ENCODE measurements at regions of chr5 and their contacts with region 1.

Region 1: GRCh38 chr5:171418316-171418981 is 998 bp upstream of the FGF18 start:
- DNase-seq: peak; percentile 87
- H3K4me3 Mint-ChIP-seq: peak overlapping the region; percentile 68
- H3K27ac Mint-ChIP-seq: no peak overlapping the region
- H3K4me1 Mint-ChIP-seq: peaks cover 34% of the 10 kb centered on the region
- H3K27me3 Mint-ChIP-seq: no peaks in the 10 kb centered on the region
- CTCF ChIP-seq: peak; percentile 99

Region 2: DNA sequence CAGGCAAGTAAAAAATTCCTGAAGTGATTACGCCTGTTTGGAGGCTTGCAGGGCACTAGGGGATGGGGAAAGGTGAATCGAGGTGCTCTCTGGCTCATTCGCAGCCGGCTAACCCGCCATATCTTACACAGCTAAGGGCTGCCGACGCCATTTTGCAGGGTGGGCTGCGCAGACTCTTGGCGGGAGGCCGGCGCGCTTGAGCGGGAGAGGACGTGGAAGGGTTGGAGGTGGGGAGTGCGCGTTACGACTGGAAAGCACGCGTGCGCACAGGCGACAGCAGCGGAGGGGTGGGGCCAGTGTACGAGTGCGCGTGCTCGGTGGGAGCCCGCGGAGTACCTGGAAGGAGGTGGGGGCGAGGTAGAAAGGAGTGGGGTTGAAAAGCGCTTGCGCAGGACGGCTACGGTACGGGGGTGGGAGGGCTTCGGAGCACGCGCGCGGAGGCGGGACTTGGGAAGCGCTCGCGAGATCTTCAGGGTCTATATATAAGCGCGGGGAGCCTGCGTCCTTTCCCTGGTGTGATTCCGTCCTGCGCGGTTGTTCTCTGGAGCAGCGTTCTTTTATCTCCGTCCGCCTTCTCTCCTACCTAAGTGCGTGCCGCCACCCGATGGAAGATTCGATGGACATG is 31.0 kb before region 1 on chr5 and contains the start of gene NPM1:
- CTCF ChIA-PET with region 1: interaction called, 3 read pairs
- POLR2A ChIA-PET with region 1: interaction called, 29 read pairs
- intact Hi-C with region 1: no loop called
- DNase-seq: peak; percentile 99
- H3K4me3 Mint-ChIP-seq: peak within 1 kb of the TSS; percentile 99
- H3K27ac Mint-ChIP-seq: peak within 1 kb of the TSS; percentile 99
- H3K4me1 Mint-ChIP-seq: peaks cover 34% of the 10 kb centered on the region
- H3K27me3 Mint-ChIP-seq: no peaks in the 10 kb centered on the region
- CTCF ChIP-seq: no peak
- total RNA-seq, gene NPM1: 3,249 and 4,548 TPM in 2 replicates

Region 3: GRCh38 chr5:171447226-171447625 is 28.8 kb after region 1 on chr5:
- CTCF ChIA-PET with region 1: interaction called, 12 read pairs
- POLR2A ChIA-PET with region 1: no interaction called
- intact Hi-C with region 1: no loop called
- DNase-seq: no peak
- H3K4me3 Mint-ChIP-seq: no peak overlapping the region
- H3K27ac Mint-ChIP-seq: no peak overlapping the region
- H3K4me1 Mint-ChIP-seq: no peaks in the 10 kb centered on the region
- H3K27me3 Mint-ChIP-seq: no peaks in the 10 kb centered on the region
- CTCF ChIP-seq: no peak

Region 4: GRCh38 chr5:171647032-171647903 is 228.8 kb after region 1 on chr5:
- CTCF ChIA-PET with region 1: no interaction called
- POLR2A ChIA-PET with region 1: no interaction called
- intact Hi-C with region 1: loop called (anchors 5 kb)
- DNase-seq: peak; percentile 78
- H3K4me3 Mint-ChIP-seq: no peak overlapping the region
- H3K27ac Mint-ChIP-seq: no peak overlapping the region
- H3K4me1 Mint-ChIP-seq: peaks cover 9% of the 10 kb centered on the region
- H3K27me3 Mint-ChIP-seq: peaks cover 17% of the 10 kb centered on the region
- CTCF ChIP-seq: peak; percentile 12

Region 5: GRCh38 chr5:171858303-171858702 is 439.9 kb after region 1 on chr5:
- CTCF ChIA-PET with region 1: interaction called, 15 read pairs
- POLR2A ChIA-PET with region 1: no interaction called
- intact Hi-C with region 1: no loop called
- DNase-seq: peak; percentile 36
- H3K4me3 Mint-ChIP-seq: no peak overlapping the region
- H3K27ac Mint-ChIP-seq: no peak overlapping the region
- H3K4me1 Mint-ChIP-seq: peaks cover 10% of the 10 kb centered on the region
- H3K27me3 Mint-ChIP-seq: no peaks in the 10 kb centered on the region
- CTCF ChIP-seq: peak; percentile 28

Region 6: DNA sequence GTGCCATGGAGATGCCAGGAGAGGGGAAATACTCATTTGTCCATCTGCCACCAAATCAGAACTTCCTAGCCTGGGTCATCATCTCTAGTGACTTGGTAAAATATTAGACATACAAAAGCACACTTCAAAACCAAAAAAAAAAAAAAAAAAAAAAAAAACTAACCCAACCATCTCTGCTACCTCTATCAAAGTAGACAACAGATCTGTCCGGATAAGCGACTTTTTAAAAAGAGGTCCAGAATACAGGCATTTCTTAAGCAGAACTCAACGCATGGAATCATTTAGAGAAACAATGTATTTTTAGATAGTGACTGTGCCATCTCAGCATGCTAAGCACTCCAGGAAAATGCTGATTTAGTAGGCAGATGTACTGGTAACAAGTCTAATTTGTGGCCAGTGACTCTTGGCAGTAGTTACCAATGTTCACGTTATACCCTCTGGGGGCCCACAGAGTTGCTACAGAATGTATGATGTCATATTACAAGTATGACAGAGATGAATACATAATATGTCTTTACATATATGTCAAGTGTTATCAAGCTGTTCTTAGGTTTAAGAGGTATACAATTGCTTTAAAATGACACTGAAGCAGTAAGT is 474.9 kb after region 1 on chr5:
- CTCF ChIA-PET with region 1: interaction called, 15 read pairs
- POLR2A ChIA-PET with region 1: no interaction called
- intact Hi-C with region 1: no loop called
- DNase-seq: peak; percentile 8
- H3K4me3 Mint-ChIP-seq: no peak overlapping the region
- H3K27ac Mint-ChIP-seq: peak overlapping the region; percentile 8
- H3K4me1 Mint-ChIP-seq: no peaks in the 10 kb centered on the region
- H3K27me3 Mint-ChIP-seq: no peaks in the 10 kb centered on the region
- CTCF ChIP-seq: no peak

Region 7: GRCh38 chr5:172035039-172035438 is 616.6 kb after region 1 on chr5:
- CTCF ChIA-PET with region 1: interaction called, 5 read pairs
- POLR2A ChIA-PET with region 1: no interaction called
- intact Hi-C with region 1: loop called (anchors 1 kb)
- DNase-seq: no peak
- H3K4me3 Mint-ChIP-seq: no peak overlapping the region
- H3K27ac Mint-ChIP-seq: no peak overlapping the region
- H3K4me1 Mint-ChIP-seq: peaks cover 2% of the 10 kb centered on the region
- H3K27me3 Mint-ChIP-seq: no peaks in the 10 kb centered on the region
- CTCF ChIP-seq: no peak

Measured in MCF 10A (cell line).